PC-3 (cell line): ENCODE measurements at regions of chrX and their contacts with region 1.

Region 1: GRCh38 chrX:135287266-135287823 is 21.9 kb upstream of the ETDC start:
- DNase-seq: no peak
- ATAC-seq: no peak
- H3K4me3 ChIP-seq: no peak overlapping the region
- H3K27ac ChIP-seq: no peak overlapping the region
- H3K4me1 ChIP-seq: no peaks in the 10 kb centered on the region
- H3K27me3 ChIP-seq: no peaks in the 10 kb centered on the region
- CTCF ChIP-seq: no peak

Region 2: DNA sequence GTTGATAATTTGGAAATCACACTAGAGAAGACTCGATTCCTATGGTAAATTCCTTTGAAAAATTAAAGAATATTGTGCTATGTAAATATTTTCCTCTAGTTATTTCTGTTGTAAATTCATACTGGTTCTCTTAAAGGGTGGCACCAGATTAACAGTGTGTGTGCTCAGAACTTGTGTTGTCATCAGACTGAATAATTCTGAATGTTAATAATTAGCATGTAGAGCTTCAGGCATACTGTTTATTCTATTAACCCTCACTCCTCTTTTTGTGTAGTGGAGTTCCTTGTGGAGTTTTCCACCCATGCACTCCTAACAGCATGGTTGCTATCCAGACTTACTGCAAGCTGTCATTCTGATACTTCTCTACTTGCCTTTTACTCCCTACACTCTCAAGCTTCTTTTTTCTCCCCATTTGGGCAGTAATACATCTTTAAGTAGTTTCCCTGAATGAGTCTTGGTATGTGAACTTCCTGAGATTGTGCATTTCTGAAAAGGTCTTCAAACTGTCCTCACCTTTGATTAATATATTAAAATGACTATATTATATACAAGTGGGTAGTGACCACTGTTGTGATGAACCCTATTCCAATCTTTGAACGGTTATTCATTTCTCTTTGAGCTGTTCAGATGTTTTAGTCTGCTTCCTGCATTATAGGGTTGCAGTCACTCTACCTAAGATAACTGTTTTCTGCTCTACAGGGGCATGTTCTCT is 205.5 kb before region 1 on chrX:
- CTCF ChIA-PET with region 1: no interaction called
- POLR2A ChIA-PET with region 1: no interaction called
- intact Hi-C with region 1: no loop called
- DNase-seq: no peak
- ATAC-seq: no peak
- H3K4me3 ChIP-seq: no peak overlapping the region
- H3K27ac ChIP-seq: no peak overlapping the region
- H3K4me1 ChIP-seq: no peaks in the 10 kb centered on the region
- H3K27me3 ChIP-seq: 0 out of 2 replicates have a peak, but pooled peaks cover under 1% of the 10 kb centered on the region
- CTCF ChIP-seq: no peak

Region 3: GRCh38 chrX:135572436-135572835 is 285.1 kb after region 1 on chrX:
- CTCF ChIA-PET with region 1: no interaction called
- POLR2A ChIA-PET with region 1: no interaction called
- intact Hi-C with region 1: no loop called
- DNase-seq: no peak
- ATAC-seq: no peak
- H3K4me3 ChIP-seq: no peak overlapping the region
- H3K27ac ChIP-seq: no peak overlapping the region
- H3K4me1 ChIP-seq: no peaks in the 10 kb centered on the region
- H3K27me3 ChIP-seq: no peaks in the 10 kb centered on the region
- CTCF ChIP-seq: peak; percentile 64

Region 4: DNA sequence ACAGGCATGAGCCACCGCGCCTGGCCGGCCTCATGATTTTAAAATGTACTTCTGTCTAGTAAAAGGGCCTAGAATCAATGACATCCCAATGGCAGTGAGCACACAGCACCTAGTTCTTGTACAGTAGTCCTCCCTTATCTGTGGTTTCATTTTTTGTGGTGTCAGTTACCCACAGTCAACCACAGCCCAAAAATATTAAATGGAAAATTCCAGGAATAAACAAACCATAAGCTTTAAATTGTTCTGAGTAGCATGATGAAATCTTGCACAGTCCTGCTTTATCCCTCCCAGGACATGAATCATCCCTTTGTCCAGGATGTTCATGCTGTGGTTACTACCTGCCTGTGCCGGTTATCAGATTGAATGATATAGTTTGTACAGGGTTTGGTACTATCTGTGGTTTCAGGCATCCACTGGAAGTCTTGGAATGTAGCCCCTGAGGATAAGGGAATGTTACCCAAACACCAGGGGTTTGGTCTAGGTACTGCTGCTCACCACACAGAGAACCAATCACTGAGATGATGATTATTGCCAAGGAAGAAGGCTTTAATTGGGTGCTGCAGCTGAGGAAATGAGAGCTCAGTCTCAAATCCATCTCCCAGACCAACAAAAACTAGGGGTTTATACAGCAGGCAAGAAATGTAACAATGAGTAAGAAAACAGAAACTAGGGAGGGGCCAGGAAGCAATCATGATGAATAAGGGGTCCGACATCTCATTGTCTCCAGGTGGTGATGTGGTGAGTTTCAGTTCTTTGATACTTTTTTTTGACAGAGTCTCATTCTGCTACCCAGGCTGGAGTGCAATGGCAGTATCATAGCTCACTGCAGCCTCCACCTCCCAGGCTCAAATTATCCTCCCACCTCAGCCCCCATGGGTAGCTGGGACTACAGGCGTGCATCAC is 843.8 kb after region 1 on chrX:
- CTCF ChIA-PET with region 1: no interaction called
- POLR2A ChIA-PET with region 1: interaction called, 18 read pairs
- intact Hi-C with region 1: no loop called
- DNase-seq: peak; percentile 94
- ATAC-seq: peak; percentile 92
- H3K4me3 ChIP-seq: no peak overlapping the region
- H3K27ac ChIP-seq: peak overlapping the region; percentile 94
- H3K4me1 ChIP-seq: peaks cover 13% of the 10 kb centered on the region; the same call in 1 of the 2 replicates
- H3K27me3 ChIP-seq: no peaks in the 10 kb centered on the region
- CTCF ChIP-seq: no peak